Naive thymus-derived CD8-positive, alpha-beta T cell (primary cell): ENCODE measurements at regions of chr22 and their contacts with region 1.

Region 1: DNA sequence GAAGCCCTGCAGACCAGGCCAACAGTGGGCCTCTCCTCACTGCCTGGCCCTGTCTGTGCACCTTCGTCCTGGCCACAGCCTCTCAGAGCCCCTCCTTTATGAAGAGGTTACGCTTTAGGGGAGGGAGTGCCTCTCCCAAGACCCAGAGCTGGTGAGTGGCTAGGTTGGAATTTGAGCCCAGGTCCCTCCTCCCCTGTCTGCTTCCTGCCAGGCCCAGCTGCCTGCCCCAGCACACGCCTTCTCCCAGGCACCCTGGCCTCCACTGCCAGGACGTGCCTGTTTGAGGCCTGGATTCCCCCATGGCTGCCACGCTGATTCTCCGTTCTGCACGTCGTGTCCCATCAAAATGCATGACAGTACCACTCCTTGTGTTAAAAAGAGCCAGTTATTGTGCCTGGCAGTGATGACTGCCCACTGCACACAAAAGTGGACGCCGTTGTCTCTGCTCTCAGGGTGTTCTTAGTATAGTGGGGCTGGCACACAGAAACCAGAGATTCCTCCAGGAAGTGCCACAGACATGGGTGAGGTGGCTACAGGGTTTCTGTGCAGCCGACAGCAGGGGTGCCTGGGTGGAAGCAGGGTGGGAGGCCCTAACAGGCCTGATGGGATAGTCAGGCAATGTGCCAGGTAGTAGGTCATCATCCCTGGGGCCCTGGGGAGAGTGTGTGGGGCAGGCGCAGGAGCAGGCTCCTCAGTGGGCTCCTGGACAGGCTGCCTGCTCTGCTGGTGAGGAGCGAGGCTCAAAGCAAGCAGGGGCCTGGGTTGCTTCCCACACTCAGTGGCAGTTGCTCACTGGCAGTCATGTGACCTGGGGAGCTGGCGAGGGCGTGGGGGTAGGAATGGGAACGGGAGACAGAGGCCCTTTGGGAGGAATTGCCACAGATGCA is 24.1 kb downstream of the MED15 start:
- DNase-seq: no peak
- ATAC-seq: peak; percentile 26 to 57
- H3K4me3 Mint-ChIP-seq: peak overlapping the region in 8 of 10 donors; percentile 25 to 78 (median 60)
- H3K27ac Mint-ChIP-seq: peak overlapping the region; percentile 82 to 98 (median 88)
- H3K4me1 Mint-ChIP-seq: peaks cover 40 to 79% (median 76%) of the 10 kb centered on the region in 4 donors
- H3K27me3 Mint-ChIP-seq: no peaks in the 10 kb centered on the region

Region 2: GRCh38 chr22:20545681-20546521 is 14.3 kb after region 1 on chr22:
- POLR2A ChIA-PET with region 1: interaction called, 27 read pairs
- DNase-seq: no peak
- ATAC-seq: no peak
- H3K4me3 Mint-ChIP-seq: peak overlapping the region in 6 of 10 donors; percentile 5 to 72 (median 8)
- H3K27ac Mint-ChIP-seq: peak overlapping the region; percentile 69 to 97 (median 90)
- H3K4me1 Mint-ChIP-seq: peaks cover 35 to 80% (median 73%) of the 10 kb centered on the region in 4 donors
- H3K27me3 Mint-ChIP-seq: no peaks in the 10 kb centered on the region